Right lobe of liver (tissue), 6 donors: ENCODE measurements at regions of chr7 and their contacts with region 1.

Region 1: DNA sequence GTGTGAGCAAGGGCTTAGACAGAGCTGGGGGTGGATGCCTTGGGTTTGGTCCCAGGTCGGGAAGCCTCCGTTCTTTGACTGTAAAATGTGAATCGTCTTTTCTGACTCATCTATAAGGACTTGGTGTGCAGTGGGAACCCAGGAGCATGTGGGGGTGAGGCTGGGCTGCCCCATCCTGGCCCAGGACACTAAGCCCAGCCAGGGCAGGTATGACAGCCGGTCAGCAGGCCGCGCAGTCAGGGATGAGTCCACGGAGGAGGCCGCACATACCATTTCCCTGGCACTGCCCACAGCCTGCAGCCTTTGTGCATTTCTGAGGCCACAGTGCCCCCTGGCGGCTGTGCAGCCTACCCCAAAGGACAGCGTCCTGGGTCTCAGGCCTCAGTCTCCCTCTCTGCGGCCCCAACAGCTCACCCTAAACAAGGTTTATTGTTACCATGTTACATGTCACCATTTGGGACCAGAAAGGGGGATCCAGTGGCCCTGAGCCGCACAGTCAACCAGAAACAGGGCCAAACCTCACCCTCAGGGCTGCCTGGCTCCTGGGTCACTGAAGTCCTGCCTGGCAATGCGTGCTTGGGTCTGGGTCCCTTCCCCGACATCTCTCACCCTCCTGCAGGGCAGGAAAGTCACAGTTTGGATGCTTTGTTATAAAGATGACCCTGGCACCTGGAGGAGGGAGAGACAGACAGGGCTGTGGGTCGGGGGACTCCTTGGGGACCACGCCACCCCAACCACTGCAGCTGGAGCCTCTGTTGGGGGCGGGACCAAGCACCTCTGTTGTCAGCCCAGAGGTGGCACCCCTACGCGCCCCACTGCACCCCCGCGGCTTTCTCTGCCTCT is 14.4 kb upstream of the SH2B2 start:
- DNase-seq: peak; percentile 84 to 86 (median 86)
- ATAC-seq: peak; percentile 93 to 99 (median 97)
- H3K4me3 ChIP-seq: no peak overlapping the region
- H3K27ac ChIP-seq: no peak overlapping the region
- H3K4me1 ChIP-seq: no peaks in the 10 kb centered on the region
- H3K27me3 ChIP-seq: no peaks in the 10 kb centered on the region
- CTCF ChIP-seq: peak; percentile 91 to 96 (median 94)
- POLR2A ChIP-seq: no peak

Region 2: GRCh38 chr7:101542527-101543241 is 729.6 kb before region 1 on chr7:
- intact Hi-C with region 1: loop called (anchors 5 kb)
- DNase-seq: peak in 2 of 3 donors; percentile 64 to 77
- ATAC-seq: peak; percentile 64 to 70 (median 69)
- H3K4me3 ChIP-seq: no peak overlapping the region
- H3K27ac ChIP-seq: no peak overlapping the region
- H3K4me1 ChIP-seq: peaks cover 0 to 4% (median under 1%) of the 10 kb centered on the region in 4 donors
- H3K27me3 ChIP-seq: no peaks in the 10 kb centered on the region
- CTCF ChIP-seq: peak; percentile 87 to 91 (median 88)
- POLR2A ChIP-seq: no peak